Gastrocnemius medialis (tissue), 4 donors: ENCODE measurements at regions of chrX and their contacts with region 1.

Region 1: DNA sequence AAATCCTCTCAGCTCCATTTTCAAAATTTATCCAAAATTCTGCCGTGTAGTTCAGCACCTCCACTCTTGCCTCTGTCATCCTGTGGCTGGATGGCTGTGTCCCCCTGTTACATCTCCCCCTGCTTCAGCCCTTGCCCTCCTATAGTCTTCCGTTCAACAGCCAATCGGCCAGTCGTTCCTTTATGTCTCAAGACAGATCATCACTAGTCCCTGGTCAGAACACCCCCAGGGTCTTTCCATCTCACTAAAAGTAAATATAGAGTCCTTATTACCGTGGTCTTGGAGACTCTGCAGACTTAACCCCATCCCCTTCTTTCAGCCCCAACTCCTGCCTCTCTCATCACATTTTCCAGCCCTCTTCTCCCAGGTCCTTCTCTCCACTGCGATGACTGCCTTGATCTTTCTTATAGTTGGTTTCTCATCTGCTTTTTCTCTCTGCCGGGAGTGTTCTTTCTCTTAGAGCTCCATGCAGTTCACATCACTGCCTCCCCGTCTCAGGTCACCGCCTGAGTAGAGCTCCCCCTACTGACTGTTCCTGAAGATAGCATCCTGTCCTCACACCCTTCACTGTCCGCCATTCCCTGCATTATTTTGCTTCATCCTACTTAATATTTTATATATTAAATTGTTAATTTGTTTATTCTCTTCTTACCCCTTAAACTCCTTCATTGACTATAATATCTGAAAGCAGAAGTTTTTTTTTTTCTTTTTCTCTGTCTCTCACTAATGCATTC is 736.9 kb upstream of the MAGEB2 start:
- DNase-seq: no peak
- ATAC-seq: no peak
- H3K4me3 ChIP-seq: no peak overlapping the region
- H3K27ac ChIP-seq: no peak overlapping the region
- H3K4me1 ChIP-seq: no peaks in the 10 kb centered on the region
- H3K27me3 ChIP-seq: no peaks in the 10 kb centered on the region
- CTCF ChIP-seq: peak in 1 of 5 experiments; percentile 9
- POLR2A ChIP-seq: no peak

Region 2: DNA sequence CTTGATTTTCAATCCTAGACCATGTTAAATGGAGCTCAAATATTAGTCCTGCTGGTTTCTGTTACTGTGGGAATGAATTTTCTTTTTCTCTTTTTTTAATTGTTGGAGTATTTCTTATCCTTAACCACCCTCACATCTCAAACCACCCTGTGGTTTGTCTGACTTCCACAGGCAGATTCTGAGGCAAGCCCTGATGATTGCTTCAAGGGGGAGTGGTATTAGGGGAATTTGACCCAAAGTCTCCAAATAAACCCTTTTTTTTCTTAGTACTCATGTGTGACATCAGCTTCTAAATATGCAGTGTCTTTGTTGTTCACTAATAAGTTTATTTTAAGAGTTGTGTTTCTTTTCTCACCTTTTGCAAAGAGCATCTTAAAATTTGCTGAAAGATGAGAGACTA is 81.0 kb before region 1 on chrX:
- in situ Hi-C with region 1: loop called in 1 of 4 experiments (anchors 25 kb)
- intact Hi-C with region 1: no loop called
- DNase-seq: no peak
- ATAC-seq: no peak
- H3K4me3 ChIP-seq: no peak overlapping the region
- H3K27ac ChIP-seq: no peak overlapping the region
- H3K4me1 ChIP-seq: no peaks in the 10 kb centered on the region
- H3K27me3 ChIP-seq: no peaks in the 10 kb centered on the region
- CTCF ChIP-seq: no peak
- POLR2A ChIP-seq: no peak

Region 3: DNA sequence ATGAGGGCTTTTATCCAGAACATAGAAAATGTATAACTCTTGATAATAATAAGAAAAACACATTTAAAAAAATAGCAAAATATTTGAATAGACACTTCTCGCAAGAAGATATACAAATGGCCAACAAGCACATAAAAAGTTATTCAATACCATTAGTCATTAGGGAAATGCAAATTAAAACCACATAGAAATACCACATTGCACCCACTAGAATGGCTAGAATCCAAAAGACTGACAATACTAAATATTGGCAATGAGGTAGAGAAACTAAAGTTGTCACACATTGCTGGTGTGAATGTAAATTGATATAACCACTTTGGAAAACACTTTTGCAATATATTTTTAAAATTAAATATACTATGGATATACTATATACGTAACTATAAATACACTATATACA is 17.5 kb before region 1 on chrX:
- in situ Hi-C with region 1: no loop called
- intact Hi-C with region 1: no loop called
- DNase-seq: no peak
- ATAC-seq: no peak
- H3K4me3 ChIP-seq: no peak overlapping the region
- H3K27ac ChIP-seq: no peak overlapping the region
- H3K4me1 ChIP-seq: no peaks in the 10 kb centered on the region
- H3K27me3 ChIP-seq: no peaks in the 10 kb centered on the region
- CTCF ChIP-seq: no peak
- POLR2A ChIP-seq: no peak